Right cardiac atrium (tissue), 5 donors: ENCODE measurements at regions of chr11 and their contacts with region 1.

Region 1: DNA sequence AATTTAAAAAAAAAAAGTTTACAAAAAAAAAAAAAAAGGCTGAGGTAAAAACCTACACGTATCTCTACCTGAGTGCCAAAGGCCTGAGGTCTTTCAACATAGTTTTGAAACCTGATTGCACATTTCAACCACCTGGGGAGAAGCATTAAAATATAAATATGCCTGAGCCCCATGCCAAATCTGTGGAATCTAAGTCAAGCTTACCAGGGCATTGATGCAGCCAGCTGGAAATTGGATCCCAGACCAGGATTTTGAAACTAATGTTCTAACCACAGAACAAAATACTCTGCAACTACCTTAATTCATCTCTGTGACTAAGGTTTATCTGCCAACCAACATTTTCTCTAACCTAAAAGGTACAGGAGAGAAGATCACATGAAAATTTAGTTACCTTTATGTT is 38.8 kb upstream of the CHRNA10 start:
- DNase-seq: no peak
- ATAC-seq: no peak
- H3K4me3 ChIP-seq: no peak overlapping the region
- H3K27ac ChIP-seq: no peak overlapping the region
- H3K4me1 ChIP-seq: no peaks in the 10 kb centered on the region
- H3K27me3 ChIP-seq: no peaks in the 10 kb centered on the region

Region 2: GRCh38 chr11:3767536-3767935 is 57.6 kb after region 1 on chr11:
- intact Hi-C with region 1: loop called in 2 of 4 experiments (anchors 10 kb)
- DNase-seq: no peak
- ATAC-seq: no peak
- H3K4me3 ChIP-seq: no peak overlapping the region
- H3K27ac ChIP-seq: no peak overlapping the region
- H3K4me1 ChIP-seq: no peaks in the 10 kb centered on the region
- H3K27me3 ChIP-seq: no peaks in the 10 kb centered on the region

Region 3: DNA sequence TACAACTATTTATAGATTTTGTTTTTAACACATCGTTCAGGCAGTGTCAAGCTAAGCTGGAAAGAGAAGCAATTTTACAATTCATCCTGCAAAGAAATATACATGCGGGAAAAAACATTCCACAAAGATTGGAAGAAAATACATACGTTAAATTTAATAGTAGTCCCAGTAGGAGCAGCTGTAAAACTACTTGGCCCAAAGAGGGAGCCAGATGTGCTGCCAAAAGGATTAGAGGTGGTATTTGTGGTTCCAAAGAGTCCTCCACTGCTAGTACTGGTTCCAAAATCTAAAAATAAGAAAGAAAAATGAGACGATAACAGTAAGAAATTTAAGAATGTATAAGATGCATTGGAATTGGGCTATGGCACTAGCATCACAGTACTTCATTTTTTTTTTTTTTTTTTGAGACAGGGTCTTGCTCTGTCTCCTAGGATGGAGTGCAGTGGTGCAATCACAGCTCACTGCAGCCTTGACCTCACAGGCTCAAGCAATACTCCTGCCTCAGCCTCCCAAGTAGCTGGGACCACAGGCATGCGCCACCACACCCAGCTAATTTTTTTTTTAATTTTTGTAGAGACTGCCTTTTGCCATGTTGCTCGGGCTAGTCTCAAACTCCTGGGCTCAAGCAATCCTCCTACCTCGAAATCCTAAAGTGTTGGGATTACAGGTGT is 65.9 kb after region 1 on chr11:
- intact Hi-C with region 1: loop called in 1 of 4 experiments (anchors 10 kb)
- DNase-seq: no peak
- ATAC-seq: no peak
- H3K4me3 ChIP-seq: no peak overlapping the region
- H3K27ac ChIP-seq: no peak overlapping the region
- H3K4me1 ChIP-seq: no peaks in the 10 kb centered on the region
- H3K27me3 ChIP-seq: no peaks in the 10 kb centered on the region